Naive thymus-derived CD4-positive, alpha-beta T cell (primary cell): ENCODE measurements at regions of chr12 and their contacts with region 1.

Region 1: DNA sequence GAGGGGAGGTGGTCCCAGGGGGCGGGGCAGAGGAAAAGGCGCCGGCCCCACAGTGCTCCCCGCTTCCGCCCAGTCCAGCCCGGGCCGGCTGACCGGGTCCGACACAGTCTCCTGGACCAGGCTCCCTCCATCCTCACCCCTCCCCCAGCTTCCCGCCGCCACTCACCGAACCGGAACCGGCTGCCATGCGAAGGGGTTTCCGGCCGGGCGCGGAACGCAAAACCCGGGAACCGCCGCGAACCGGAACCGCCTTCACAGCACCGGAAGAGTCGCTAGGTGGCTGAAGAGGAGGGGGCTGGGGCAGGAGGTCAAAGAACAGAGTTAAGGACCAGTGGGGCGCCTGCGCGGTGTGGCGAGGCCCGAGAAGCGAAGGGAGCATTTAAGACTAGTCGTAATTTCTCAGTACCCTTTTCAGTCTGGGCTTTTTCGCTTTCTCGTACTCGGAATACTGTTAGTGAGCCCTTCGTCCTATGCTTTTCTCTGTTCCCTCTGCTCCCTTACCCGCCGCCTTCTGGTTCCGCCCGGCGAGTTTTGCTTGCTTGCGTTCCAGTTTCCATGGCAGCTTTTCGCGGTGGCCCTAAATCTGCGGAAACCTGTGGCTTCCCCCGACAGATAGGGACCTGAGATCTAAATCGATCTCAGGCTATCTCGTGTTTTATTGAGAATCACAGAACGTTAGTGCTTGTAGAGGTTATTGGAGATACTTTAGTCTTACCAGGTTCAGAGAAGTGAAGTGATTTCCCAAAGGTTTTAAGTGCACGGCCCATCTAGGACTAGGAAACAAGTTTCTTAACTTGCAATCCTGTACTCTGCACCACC is at the start of gene SENP1:
- DNase-seq: peak; percentile 81 to 93 (median 90)
- ATAC-seq: peak; percentile 88
- H3K4me3 ChIP-seq: peak within 1 kb of the TSS; percentile 89
- H3K4me3 Mint-ChIP-seq: peak within 1 kb of the TSS; percentile 88 to 96 (median 92)
- H3K27ac ChIP-seq: peak within 1 kb of the TSS; percentile 93
- H3K27ac Mint-ChIP-seq: peak within 1 kb of the TSS; percentile 90 to 100 (median 95)
- H3K4me1 ChIP-seq: peaks cover 17 to 25% of the 10 kb centered on the region in 2 donors
- H3K4me1 Mint-ChIP-seq: peaks cover 33 to 65% (median 58%) of the 10 kb centered on the region in 7 donors
- H3K27me3 ChIP-seq: no peaks in the 10 kb centered on the region
- H3K27me3 Mint-ChIP-seq: peaks cover 0 to 8% (median 0%) of the 10 kb centered on the region in 5 donors
- total RNA-seq, gene SENP1: 16.9 to 41.9 (median 31.5) TPM

Region 2: GRCh38 chr12:47904713-47905310 is 201.3 kb before region 1 on chr12 and contains the start of gene VDR:
- CTCF ChIA-PET with region 1: no interaction called
- POLR2A ChIA-PET with region 1: no interaction called
- intact Hi-C with region 1: loop called in 1 of 2 experiments (anchors 10 kb)
- DNase-seq: peak; percentile 42 to 76 (median 64)
- ATAC-seq: peak; percentile 86
- H3K4me3 ChIP-seq: peak within 1 kb of the TSS; percentile 73
- H3K4me3 Mint-ChIP-seq: peak within 1 kb of the TSS; percentile 86 to 98 (median 94)
- H3K27ac ChIP-seq: peak within 1 kb of the TSS; percentile 44
- H3K27ac Mint-ChIP-seq: peak within 1 kb of the TSS; percentile 51 to 88 (median 74)
- H3K4me1 ChIP-seq: peaks cover 25 to 41% of the 10 kb centered on the region in 2 donors
- H3K4me1 Mint-ChIP-seq: peaks cover 35 to 57% (median 47%) of the 10 kb centered on the region in 7 donors
- H3K27me3 ChIP-seq: no peaks in the 10 kb centered on the region
- H3K27me3 Mint-ChIP-seq: peaks cover 0 to 34% (median 0%) of the 10 kb centered on the region in 5 donors
- total RNA-seq, gene VDR: 1.6 to 82.6 (median 2.9) TPM

Region 3: GRCh38 chr12:47990351-47991105 is 115.5 kb before region 1 on chr12:
- CTCF ChIA-PET with region 1: no interaction called
- POLR2A ChIA-PET with region 1: no interaction called
- intact Hi-C with region 1: no loop called
- DNase-seq: peak in 8 of 9 donors; percentile 49 to 73 (median 64)
- ATAC-seq: peak; percentile 89
- H3K4me3 ChIP-seq: no peak overlapping the region
- H3K4me3 Mint-ChIP-seq: peak overlapping the region; percentile 44 to 72 (median 60)
- H3K27ac ChIP-seq: no peak overlapping the region
- H3K27ac Mint-ChIP-seq: peak overlapping the region in 5 of 9 donors; percentile 7 to 67 (median 36)
- H3K4me1 ChIP-seq: peaks cover 17 to 24% of the 10 kb centered on the region in 2 donors
- H3K4me1 Mint-ChIP-seq: peaks cover 19 to 30% (median 23%) of the 10 kb centered on the region in 7 donors
- H3K27me3 ChIP-seq: no peaks in the 10 kb centered on the region
- H3K27me3 Mint-ChIP-seq: peaks cover 8 to 82% (median 18%) of the 10 kb centered on the region in 5 donors

Region 4: DNA sequence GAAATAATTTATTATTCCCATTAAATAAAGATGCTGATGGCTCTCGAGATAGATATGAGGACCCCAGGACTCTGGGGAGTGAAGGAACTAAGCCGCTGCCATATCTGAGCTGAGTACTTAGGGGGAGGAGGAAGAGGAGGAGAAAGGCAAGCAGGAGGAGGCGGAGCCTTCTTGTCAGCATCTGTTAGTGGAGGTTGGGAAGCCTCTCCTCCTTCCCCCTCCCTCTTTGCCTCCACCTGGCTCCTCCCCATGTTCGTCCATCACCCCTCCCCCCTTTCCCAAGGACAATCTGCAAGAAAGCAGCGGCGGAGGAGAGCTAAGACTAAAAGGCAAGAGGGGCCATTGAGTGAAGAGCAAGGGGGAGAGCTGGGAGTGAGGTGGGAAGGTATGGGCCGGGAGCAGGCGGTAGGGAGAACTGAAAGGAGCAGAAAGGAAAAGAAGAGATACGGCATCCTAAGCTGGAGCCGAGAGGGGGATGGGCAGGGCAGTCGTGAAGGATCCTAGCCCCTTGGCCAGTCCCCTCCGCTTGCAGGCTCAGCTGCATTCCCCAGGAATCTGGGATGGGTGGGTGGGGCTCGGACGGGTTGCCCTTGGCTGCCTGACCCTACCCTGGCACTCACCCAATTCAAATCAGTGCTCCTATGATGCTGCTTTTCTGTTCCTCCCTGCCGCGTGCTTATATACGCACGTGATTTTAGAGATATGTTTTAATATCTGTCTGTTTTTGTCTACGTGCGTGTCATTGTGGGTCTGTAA is 13.2 kb after region 1 on chr12 and contains the start of gene PFKM:
- CTCF ChIA-PET with region 1: interaction called, 5 read pairs
- POLR2A ChIA-PET with region 1: interaction called, 7 read pairs
- intact Hi-C with region 1: loop called (anchors 1 kb)
- DNase-seq: peak; percentile 16 to 71 (median 63)
- ATAC-seq: peak; percentile 99
- H3K4me3 ChIP-seq: peak within 1 kb of the TSS; percentile 85
- H3K4me3 Mint-ChIP-seq: peak within 1 kb of the TSS; percentile 91 to 100 (median 98)
- H3K27ac ChIP-seq: peak within 1 kb of the TSS; percentile 60
- H3K27ac Mint-ChIP-seq: peak within 1 kb of the TSS; percentile 60 to 97 (median 84)
- H3K4me1 ChIP-seq: peaks cover 0 to 3% of the 10 kb centered on the region in 2 donors
- H3K4me1 Mint-ChIP-seq: peaks cover 13 to 25% (median 24%) of the 10 kb centered on the region in 7 donors
- H3K27me3 ChIP-seq: no peaks in the 10 kb centered on the region
- H3K27me3 Mint-ChIP-seq: peaks cover 0 to 29% (median 9%) of the 10 kb centered on the region in 5 donors
- total RNA-seq, gene PFKM: 11.7 to 20.3 (median 14.5) TPM

Region 5: GRCh38 chr12:48183091-48183875 is 77.2 kb after region 1 on chr12 and contains the start of gene CCDC184:
- CTCF ChIA-PET with region 1: no interaction called
- POLR2A ChIA-PET with region 1: interaction called, 4 read pairs
- intact Hi-C with region 1: loop called in 1 of 2 experiments (anchors 1 kb)
- DNase-seq: peak; percentile 58 to 85 (median 83)
- ATAC-seq: peak; percentile 84
- H3K4me3 ChIP-seq: peak within 1 kb of the TSS; percentile 80
- H3K4me3 Mint-ChIP-seq: peak within 1 kb of the TSS; percentile 91 to 98 (median 96)
- H3K27ac ChIP-seq: peak within 1 kb of the TSS; percentile 59
- H3K27ac Mint-ChIP-seq: peak within 1 kb of the TSS; percentile 60 to 95 (median 86)
- H3K4me1 ChIP-seq: peaks cover 6 to 11% of the 10 kb centered on the region in 2 donors
- H3K4me1 Mint-ChIP-seq: peaks cover 5 to 28% (median 8%) of the 10 kb centered on the region in 7 donors
- H3K27me3 ChIP-seq: peaks cover 0 to 4% of the 10 kb centered on the region in 2 donors
- H3K27me3 Mint-ChIP-seq: peaks cover 21 to 81% (median 38%) of the 10 kb centered on the region in 5 donors
- total RNA-seq, gene CCDC184: 0.22 to 3.8 (median 1.8) TPM in 4 of 5 experiments, not detected in the other

Region 6: GRCh38 chr12:48681738-48682532 is 575.9 kb after region 1 on chr12 and contains the start of gene KANSL2:
- CTCF ChIA-PET with region 1: no interaction called
- POLR2A ChIA-PET with region 1: no interaction called
- intact Hi-C with region 1: loop called in 1 of 2 experiments (anchors 5 kb)
- DNase-seq: peak; percentile 79 to 98 (median 96)
- ATAC-seq: peak; percentile 97
- H3K4me3 ChIP-seq: peak within 1 kb of the TSS; percentile 88
- H3K4me3 Mint-ChIP-seq: peak within 1 kb of the TSS; percentile 93 to 99 (median 97)
- H3K27ac ChIP-seq: peak within 1 kb of the TSS; percentile 90
- H3K27ac Mint-ChIP-seq: peak within 1 kb of the TSS; percentile 97 to 99 (median 98)
- H3K4me1 ChIP-seq: peaks cover 30 to 38% of the 10 kb centered on the region in 2 donors
- H3K4me1 Mint-ChIP-seq: peaks cover 32 to 59% (median 53%) of the 10 kb centered on the region in 7 donors
- H3K27me3 ChIP-seq: no peaks in the 10 kb centered on the region
- H3K27me3 Mint-ChIP-seq: no peaks in the 10 kb centered on the region
- total RNA-seq, gene KANSL2: 37.5 to 117 (median 74.4) TPM